ENCODE measurements at regions of chr11 and their contacts with region 1.

Region 1: DNA sequence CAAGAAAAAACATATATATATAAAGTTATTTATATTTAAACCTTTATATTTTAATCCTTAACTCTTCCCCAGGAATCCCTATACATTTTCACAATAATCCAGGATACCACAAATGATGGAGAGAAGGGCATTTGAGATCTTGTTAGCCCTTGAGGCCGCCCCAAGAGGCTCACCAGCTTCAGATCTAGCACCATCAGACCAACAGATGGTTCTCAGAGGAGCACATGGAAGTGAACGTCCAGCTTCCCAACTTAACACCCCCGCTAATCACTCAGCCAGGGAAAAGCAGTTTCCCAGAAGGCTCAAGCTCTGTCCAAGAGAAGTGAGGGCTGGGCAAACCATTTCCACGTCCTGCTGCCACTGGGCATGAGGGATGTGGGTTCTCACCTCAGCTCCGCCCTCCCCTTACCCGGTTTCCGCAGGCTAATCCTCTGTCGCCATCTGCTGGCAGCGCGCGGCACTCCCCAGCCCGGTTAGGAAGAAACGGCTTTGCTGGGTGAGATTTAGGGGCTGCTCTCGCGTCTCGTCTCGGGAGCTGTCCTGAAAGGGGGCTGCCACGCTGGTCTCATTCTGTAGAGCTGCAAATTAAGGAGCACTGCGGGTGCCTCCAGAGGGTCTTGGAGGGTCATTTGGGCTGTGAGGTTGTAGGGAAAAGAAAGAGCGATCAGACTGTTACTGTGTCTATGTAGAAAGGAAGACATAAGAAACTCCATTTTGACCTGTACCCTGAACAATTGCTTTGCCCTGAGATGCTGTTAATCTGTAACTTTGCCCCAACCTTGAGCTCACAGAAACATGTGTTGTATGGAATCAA is 6.8 kb upstream of the FAM111A start:
- DNase-seq: peak; percentile 72 to 87
- ATAC-seq: peak; percentile 81 to 96 (median 88)
- H3K4me3 ChIP-seq: peak overlapping the region; percentile 46
- H3K27ac ChIP-seq: no peak overlapping the region
- H3K4me1 ChIP-seq: no peaks in the 10 kb centered on the region
- H3K27me3 ChIP-seq: peaks cover 0 to 2% (median 0%) of the 10 kb centered on the region in 3 donors
- CTCF ChIP-seq: peak; percentile 95

Region 2: GRCh38 chr11:58654079-58654907 is 481.6 kb before region 1 on chr11:
- intact Hi-C with region 1: loop called (anchors 10 kb)
- DNase-seq: peak; percentile 74 to 82
- ATAC-seq: peak; percentile 81 to 94 (median 92)
- H3K4me3 ChIP-seq: no peak overlapping the region
- H3K27ac ChIP-seq: no peak overlapping the region
- H3K4me1 ChIP-seq: no peaks in the 10 kb centered on the region
- H3K27me3 ChIP-seq: no peaks in the 10 kb centered on the region
- CTCF ChIP-seq: peak; percentile 81

Region 3: GRCh38 chr11:59053387-59053786 is 82.5 kb before region 1 on chr11:
- intact Hi-C with region 1: loop called in 1 of 2 experiments (anchors 5 kb)
- DNase-seq: peak; percentile 62 to 72
- ATAC-seq: no peak
- H3K4me3 ChIP-seq: no peak overlapping the region
- H3K27ac ChIP-seq: no peak overlapping the region
- H3K4me1 ChIP-seq: no peaks in the 10 kb centered on the region
- H3K27me3 ChIP-seq: peaks cover 0 to 3% (median 0%) of the 10 kb centered on the region in 3 donors
- CTCF ChIP-seq: peak; percentile 61

Region 4: DNA sequence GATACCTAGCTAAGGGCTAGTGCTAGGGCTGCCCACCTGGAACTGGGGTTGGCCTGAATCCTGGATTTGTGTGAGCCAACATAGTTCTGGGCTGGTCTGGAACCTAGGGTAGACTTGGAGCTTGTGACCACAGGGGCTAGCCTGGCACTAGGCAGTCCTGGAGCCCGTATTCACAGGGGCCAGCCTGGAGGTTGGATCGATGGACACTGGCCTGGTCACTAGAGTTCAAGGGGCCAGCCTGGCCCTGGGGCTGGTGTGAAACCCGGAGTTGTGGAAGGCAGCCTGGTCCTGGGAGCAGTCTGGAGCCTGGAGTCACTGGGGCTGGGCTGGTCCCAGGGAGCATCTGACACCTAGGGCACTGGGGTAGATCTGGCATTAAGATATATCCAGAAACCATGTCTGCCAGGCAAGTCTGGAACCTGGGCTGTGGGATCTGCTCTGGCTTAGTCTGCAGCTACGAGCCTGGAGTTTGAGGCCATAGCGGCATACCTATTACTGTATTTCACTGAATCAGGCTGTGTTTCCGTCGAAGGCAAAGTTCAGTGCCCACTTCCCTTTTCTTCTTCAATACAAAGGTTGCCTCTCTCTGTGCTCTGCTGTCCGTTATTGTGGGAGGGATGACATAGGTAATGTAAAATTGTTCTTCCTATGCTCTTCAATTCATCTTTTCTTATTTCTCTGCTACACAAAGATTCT is 58.8 kb before region 1 on chr11:
- intact Hi-C with region 1: no loop called
- DNase-seq: no peak
- ATAC-seq: no peak
- H3K4me3 ChIP-seq: no peak overlapping the region
- H3K27ac ChIP-seq: no peak overlapping the region
- H3K4me1 ChIP-seq: no peaks in the 10 kb centered on the region
- H3K27me3 ChIP-seq: no peaks in the 10 kb centered on the region
- CTCF ChIP-seq: no peak

Region 5: GRCh38 chr11:59097113-59097708 is 38.6 kb before region 1 on chr11:
- intact Hi-C with region 1: loop called in 1 of 2 experiments (anchors 5 kb)
- DNase-seq: peak; percentile 46 to 60
- ATAC-seq: no peak
- H3K4me3 ChIP-seq: no peak overlapping the region
- H3K27ac ChIP-seq: no peak overlapping the region
- H3K4me1 ChIP-seq: no peaks in the 10 kb centered on the region
- H3K27me3 ChIP-seq: peaks cover 0 to 11% (median under 1%) of the 10 kb centered on the region in 3 donors
- CTCF ChIP-seq: peak; percentile 49

Region 6: GRCh38 chr11:59171508-59172322 is 35.9 kb after region 1 on chr11 and contains the start of gene DTX4:
- intact Hi-C with region 1: no loop called
- DNase-seq: peak; percentile 90 to 95
- ATAC-seq: peak; percentile 94 to 99 (median 98)
- H3K4me3 ChIP-seq: peak within 1 kb of the TSS; percentile 72
- H3K27ac ChIP-seq: no peak within 1 kb of the TSS
- H3K4me1 ChIP-seq: no peaks in the 10 kb centered on the region
- H3K27me3 ChIP-seq: peaks cover 0 to 27% (median 4%) of the 10 kb centered on the region in 3 donors
- CTCF ChIP-seq: peak; percentile 87
- total RNA-seq, gene DTX4: 1.2 to 2.7 (median 2.3) TPM

Region 7: DNA sequence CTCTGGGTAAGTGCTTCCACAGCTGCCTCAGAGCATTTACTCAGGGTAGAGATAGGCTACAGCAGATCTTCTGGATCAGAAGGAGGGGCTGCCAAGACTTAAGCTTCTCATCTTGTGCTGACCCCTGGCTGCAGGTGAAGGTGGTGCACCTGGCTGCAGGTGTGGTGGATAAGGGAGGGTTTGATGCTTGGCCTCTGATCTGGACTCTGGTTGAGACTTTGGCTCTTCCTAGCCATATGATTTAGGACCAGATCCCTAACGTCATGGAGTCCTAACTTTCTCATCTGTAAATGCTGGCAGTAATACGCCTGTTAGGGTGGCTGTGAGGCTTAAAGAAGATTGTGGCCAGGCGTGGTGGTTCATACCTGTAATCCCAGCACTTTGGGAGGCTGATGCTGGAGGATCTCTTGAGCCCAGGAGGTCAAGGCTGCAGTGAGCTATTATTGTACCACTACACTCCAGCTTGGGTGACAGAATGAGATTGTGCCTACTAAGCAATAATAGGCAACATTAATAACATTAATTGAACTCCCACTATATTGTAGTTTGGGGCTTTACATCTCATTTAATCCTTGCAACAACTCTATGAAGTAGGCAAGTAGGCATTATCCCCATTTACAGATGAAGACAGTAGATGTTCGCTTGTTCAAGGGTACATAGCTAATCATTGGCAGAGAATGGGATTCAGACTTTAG is 46.7 kb after region 1 on chr11:
- intact Hi-C with region 1: no loop called
- DNase-seq: no peak
- ATAC-seq: no peak
- H3K4me3 ChIP-seq: no peak overlapping the region
- H3K27ac ChIP-seq: no peak overlapping the region
- H3K4me1 ChIP-seq: no peaks in the 10 kb centered on the region
- H3K27me3 ChIP-seq: peaks cover 0 to 9% (median 2%) of the 10 kb centered on the region in 3 donors
- CTCF ChIP-seq: no peak